GM10248 (cell line): ENCODE measurements at regions of chr9 and their contacts with region 1.

Region 1: GRCh38 chr9:96232539-96233241 is 69.3 kb downstream of the HSD17B3 start:
- DNase-seq: peak; percentile 65
- CTCF ChIP-seq: peak; percentile 70

Region 2: DNA sequence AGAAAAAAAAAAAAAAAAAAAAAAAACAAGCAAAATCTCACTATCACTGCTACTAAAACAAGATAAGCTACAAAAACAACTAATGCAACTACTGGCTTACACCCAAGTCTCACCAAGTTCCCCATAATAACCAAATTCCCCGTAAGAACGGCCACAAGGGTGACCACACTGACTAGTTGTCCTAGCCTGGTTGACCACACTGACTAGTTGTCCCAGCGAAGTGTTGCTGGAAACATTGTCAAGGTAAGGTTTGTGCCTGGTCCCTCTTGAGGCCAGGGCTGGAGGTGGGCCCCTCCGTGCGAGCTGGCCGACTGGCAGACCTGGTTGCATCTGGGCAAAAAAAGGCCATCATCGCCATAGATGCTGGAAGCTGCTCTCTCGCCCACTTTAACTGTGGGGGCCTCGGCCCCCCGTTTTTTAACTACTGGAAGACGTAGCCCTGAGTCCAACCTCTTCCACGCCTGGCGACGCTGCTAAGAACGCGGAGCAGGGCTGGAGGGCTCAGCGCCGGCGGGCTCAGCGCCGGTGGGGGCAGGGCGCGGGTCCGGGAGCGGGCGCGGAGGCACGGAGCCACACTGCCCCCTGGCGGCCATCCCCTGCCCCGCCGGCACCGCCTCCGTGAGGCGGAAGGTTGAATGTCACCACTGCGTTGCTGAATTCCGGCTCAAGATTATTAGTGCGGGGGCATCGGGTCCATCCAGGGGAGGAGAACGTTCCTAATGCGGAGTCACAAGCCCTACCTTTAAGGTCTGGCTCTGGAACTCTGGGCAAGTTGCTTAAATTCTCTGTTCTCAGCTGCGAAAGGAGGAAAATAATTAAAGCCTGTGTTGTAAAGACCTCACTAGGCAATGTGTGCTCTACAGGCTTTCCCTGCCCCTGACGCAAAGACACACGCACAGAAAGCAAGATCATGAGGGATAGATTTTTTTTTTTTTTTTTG is 14.7 kb before region 1 on chr9:
- CTCF ChIA-PET with region 1: interaction called, 17 read pairs
- POLR2A ChIA-PET with region 1: no interaction called
- DNase-seq: peak; percentile 87
- CTCF ChIP-seq: peak; percentile 95

Region 3: GRCh38 chr9:96245399-96245798 is 12.7 kb after region 1 on chr9:
- CTCF ChIA-PET with region 1: interaction called, 51 read pairs
- POLR2A ChIA-PET with region 1: no interaction called
- DNase-seq: no peak
- CTCF ChIP-seq: no peak

Region 4: GRCh38 chr9:96317335-96317980 is 84.8 kb after region 1 on chr9:
- CTCF ChIA-PET with region 1: interaction called, 12 read pairs
- POLR2A ChIA-PET with region 1: no interaction called
- DNase-seq: peak; percentile 60
- CTCF ChIP-seq: peak; percentile 62

Region 5: DNA sequence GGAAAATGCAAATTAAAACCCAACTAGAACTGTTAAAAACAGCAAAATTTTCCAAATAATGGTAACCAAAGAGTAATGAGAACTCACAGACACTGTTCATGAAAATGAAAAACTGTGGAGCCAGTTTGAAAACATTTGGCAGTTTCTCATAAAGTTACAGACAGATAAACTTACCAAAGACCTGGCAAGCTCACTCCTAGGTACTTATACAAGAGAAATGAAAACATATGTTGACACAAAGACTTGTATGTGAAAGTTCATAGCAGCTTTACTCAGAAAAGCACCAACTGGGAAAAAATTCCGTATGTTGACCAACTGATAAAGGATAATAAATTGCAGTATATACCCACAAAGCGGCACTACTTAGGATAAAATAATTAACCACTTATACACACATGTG is 611.4 kb after region 1 on chr9:
- CTCF ChIA-PET with region 1: no interaction called
- POLR2A ChIA-PET with region 1: no interaction called
- DNase-seq: no peak
- CTCF ChIP-seq: no peak